Endothelial cell of umbilical vein (primary cell): ENCODE measurements at regions of chr12 and their contacts with region 1.

Region 1: DNA sequence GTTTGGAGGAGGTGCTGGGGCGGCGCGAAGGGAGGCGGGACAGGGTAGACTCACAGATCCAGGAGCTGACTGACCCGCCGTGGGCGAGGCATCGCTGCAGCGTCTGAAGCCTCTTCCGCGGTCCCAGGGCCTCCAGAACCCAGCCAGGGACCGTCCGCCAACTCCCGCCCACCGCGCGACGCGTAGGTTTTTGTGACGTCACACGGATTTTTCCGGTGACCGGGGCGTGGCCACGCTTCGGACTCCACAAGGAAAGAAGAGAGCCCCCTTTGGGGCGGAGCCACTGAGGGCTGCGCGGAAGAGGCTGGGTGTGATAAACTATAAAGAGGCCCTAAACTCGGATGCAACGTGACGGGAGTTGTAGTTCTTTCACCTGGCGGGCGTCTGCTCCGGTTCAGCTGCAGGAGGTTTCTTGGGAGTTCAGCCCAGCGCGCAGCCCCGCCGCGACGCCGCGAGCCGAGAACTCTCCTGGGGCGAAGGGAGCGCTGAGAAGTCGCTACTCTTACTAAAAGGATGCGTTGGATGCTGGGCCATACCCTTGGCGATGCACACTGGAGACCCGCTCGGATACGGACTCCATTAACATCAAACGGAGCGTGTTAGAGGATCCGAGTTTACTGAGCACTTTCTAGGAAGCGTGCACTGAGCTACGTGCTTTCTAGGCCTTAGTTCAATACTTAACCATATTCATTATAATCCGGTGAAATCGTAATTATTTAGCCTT is at the start of gene AMN1:
- DNase-seq: peak; percentile 100
- H3K4me3 ChIP-seq: peak within 1 kb of the TSS; percentile 24 to 75 (median 55)
- H3K27ac ChIP-seq: peak within 1 kb of the TSS; percentile 90
- H3K4me1 ChIP-seq: peaks cover 37% of the 10 kb centered on the region
- H3K27me3 ChIP-seq: no peaks in the 10 kb centered on the region
- CTCF ChIP-seq: no peak
- POLR2A ChIP-seq: peak; percentile 7
- total RNA-seq, gene AMN1: 8.5 and 11.8 TPM in 2 replicates

Region 2: GRCh38 chr12:31682136-31682962 is 46.7 kb before region 1 on chr12:
- CTCF ChIA-PET with region 1: interaction called, 20 read pairs
- POLR2A ChIA-PET with region 1: interaction called, 3 read pairs
- dilution Hi-C with region 1: no loop called
- intact Hi-C with region 1: loop called (anchors 1 kb)
- DNase-seq: peak; percentile 87
- H3K4me3 ChIP-seq: no peak overlapping the region
- H3K27ac ChIP-seq: no peak overlapping the region
- H3K4me1 ChIP-seq: no peaks in the 10 kb centered on the region
- H3K27me3 ChIP-seq: no peaks in the 10 kb centered on the region
- CTCF ChIP-seq: peak; percentile 69 to 71
- POLR2A ChIP-seq: no peak

Region 3: GRCh38 chr12:31715283-31715825 is 13.7 kb before region 1 on chr12:
- CTCF ChIA-PET with region 1: interaction called, 12 read pairs
- POLR2A ChIA-PET with region 1: interaction called, 5 read pairs
- dilution Hi-C with region 1: no loop called
- intact Hi-C with region 1: no loop called
- DNase-seq: peak; percentile 89
- H3K4me3 ChIP-seq: no peak overlapping the region
- H3K27ac ChIP-seq: peak overlapping the region; percentile 85
- H3K4me1 ChIP-seq: peaks cover 10% of the 10 kb centered on the region
- H3K27me3 ChIP-seq: no peaks in the 10 kb centered on the region
- CTCF ChIP-seq: no peak
- POLR2A ChIP-seq: peak; percentile 56

Region 4: GRCh38 chr12:31749024-31749704 is 20.1 kb after region 1 on chr12:
- CTCF ChIA-PET with region 1: interaction called, 14 read pairs
- POLR2A ChIA-PET with region 1: interaction called, 13 read pairs
- dilution Hi-C with region 1: no loop called
- intact Hi-C with region 1: loop called (anchors 1 kb)
- DNase-seq: peak; percentile 98
- H3K4me3 ChIP-seq: no peak overlapping the region
- H3K27ac ChIP-seq: peak overlapping the region; percentile 93
- H3K4me1 ChIP-seq: peaks cover 42% of the 10 kb centered on the region
- H3K27me3 ChIP-seq: no peaks in the 10 kb centered on the region
- CTCF ChIP-seq: no peak
- POLR2A ChIP-seq: peak; percentile 33

Region 5: GRCh38 chr12:31783996-31784645 is 55.0 kb after region 1 on chr12:
- CTCF ChIA-PET with region 1: no interaction called
- POLR2A ChIA-PET with region 1: no interaction called
- dilution Hi-C with region 1: no loop called
- intact Hi-C with region 1: no loop called
- DNase-seq: no peak
- H3K4me3 ChIP-seq: no peak overlapping the region
- H3K27ac ChIP-seq: no peak overlapping the region
- H3K4me1 ChIP-seq: no peaks in the 10 kb centered on the region
- H3K27me3 ChIP-seq: no peaks in the 10 kb centered on the region
- CTCF ChIP-seq: no peak
- POLR2A ChIP-seq: no peak

Region 6: DNA sequence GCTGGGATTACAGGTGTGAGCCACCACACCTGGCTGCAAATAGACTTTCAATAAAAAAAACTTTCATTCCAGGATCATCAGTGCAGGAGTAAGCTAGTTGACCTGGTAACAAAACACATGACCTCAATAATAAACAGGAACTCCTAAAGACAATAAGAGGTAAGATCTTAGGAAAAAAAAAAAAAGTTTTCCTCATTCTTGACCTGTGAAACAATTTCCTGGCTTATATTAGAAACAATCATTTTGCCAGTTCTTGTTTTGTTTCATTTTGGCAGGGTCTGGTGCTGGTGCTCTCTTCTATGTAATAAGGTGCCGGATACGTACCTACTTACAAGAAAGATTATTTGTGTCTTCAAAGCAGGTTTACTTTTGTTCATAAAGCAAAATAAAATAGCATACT is 90.3 kb after region 1 on chr12:
- CTCF ChIA-PET with region 1: no interaction called
- POLR2A ChIA-PET with region 1: no interaction called
- dilution Hi-C with region 1: no loop called
- intact Hi-C with region 1: loop called (anchors 1 kb)
- DNase-seq: peak; percentile 71
- H3K4me3 ChIP-seq: no peak overlapping the region
- H3K27ac ChIP-seq: peak overlapping the region; percentile 83
- H3K4me1 ChIP-seq: peaks cover 15% of the 10 kb centered on the region
- H3K27me3 ChIP-seq: no peaks in the 10 kb centered on the region
- CTCF ChIP-seq: no peak
- POLR2A ChIP-seq: no peak

Region 7: DNA sequence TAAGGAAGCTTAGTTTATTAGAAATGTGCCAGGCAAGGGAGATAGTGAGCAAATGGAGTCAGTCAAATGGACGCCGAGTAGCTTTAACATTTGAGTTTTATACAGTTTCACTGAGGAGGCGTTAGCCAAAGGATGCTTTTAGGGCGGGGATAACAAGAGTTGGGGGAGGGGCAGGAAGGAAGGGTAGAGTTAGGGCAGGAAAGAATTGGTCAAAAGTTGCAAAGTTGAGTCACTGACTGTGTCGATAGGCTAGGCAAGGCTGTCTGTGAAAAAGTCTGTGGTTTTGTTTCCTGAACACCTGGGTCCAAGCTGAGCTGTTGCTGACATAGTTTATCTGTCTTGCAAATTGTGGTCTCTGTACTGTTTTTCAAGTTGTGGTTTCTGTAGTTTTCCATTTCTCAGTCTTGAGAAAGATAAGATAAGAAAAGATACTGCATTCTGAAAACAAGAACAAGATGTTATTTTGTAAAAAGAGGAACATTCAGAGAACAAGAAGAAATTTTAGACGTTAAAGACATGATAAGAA is 167.5 kb after region 1 on chr12:
- CTCF ChIA-PET with region 1: interaction called, 3 read pairs
- POLR2A ChIA-PET with region 1: no interaction called
- dilution Hi-C with region 1: no loop called
- intact Hi-C with region 1: loop called (anchors 1 kb)
- DNase-seq: peak; percentile 91
- H3K4me3 ChIP-seq: peak overlapping the region in 1 of 3 experiments; percentile 30
- H3K27ac ChIP-seq: peak overlapping the region; percentile 74
- H3K4me1 ChIP-seq: peaks cover 18% of the 10 kb centered on the region
- H3K27me3 ChIP-seq: no peaks in the 10 kb centered on the region
- CTCF ChIP-seq: no peak
- POLR2A ChIP-seq: no peak

Region 8: DNA sequence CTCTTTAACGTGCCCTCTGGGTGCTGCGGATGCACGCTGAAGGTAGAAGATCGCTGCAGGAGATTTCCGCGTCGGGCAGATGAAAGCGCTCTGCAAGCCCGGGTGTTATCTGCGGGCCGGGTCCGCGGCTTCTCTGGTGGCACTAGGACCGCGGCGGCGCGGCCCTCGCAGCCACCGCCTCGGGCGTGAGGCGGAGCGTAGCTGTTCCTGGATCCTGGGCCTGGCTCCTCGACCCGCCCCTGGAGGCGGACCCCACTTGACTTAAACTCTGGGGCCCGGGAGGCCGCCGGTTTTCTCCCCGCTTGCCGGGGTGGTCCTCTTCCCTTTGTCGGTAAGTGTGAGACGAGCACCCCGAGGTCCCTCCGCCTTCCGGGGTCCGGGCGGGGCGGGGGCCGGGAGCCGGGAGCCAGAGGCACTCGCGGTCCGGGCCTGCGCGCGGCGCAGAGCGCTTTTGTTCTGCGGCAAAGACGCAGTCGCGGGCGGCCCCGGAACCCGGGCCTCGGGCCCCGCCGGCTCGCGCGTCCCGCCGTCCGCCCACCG is 230.2 kb after region 1 on chr12 and contains the start of gene RESF1:
- CTCF ChIA-PET with region 1: interaction called, 9 read pairs
- POLR2A ChIA-PET with region 1: interaction called, 4 read pairs
- dilution Hi-C with region 1: no loop called
- intact Hi-C with region 1: loop called (anchors 1 kb)
- DNase-seq: peak; percentile 88
- H3K4me3 ChIP-seq: peak within 1 kb of the TSS; percentile 72 to 98 (median 88)
- H3K27ac ChIP-seq: peak within 1 kb of the TSS; percentile 74
- H3K4me1 ChIP-seq: peaks cover 21% of the 10 kb centered on the region
- H3K27me3 ChIP-seq: no peaks in the 10 kb centered on the region
- CTCF ChIP-seq: no peak
- POLR2A ChIP-seq: peak; percentile 90
- total RNA-seq, gene RESF1: 62.1 and 70.0 TPM in 2 replicates

Region 9: DNA sequence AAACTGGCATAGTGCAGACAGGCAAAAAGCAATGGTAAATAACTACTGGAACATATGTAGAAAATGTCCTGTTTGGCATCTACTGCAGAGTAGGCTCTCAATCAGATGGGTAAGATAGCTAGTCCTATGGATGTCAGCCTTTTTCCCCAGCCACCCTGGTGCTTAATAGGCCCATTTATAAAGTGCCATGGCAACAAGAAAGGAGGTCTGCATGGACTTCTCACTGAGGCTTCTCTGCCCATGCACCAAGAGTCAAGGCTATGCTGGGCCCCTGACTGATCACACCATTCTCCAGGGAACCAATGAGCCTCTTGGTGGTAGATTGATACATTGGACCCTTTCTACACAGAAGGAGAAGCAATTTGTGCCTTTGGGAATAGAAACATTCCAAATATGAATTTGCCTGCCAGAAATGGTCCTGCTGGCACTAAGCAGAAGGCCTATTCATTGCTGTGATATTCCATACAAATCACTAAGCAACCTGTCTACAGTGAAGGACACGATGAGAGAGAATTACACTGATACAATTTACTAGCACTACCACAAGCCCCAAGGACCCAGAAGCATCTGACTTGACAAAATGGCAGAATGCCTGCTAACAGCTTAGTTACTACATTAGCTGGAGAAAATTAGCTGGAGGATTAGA is 273.9 kb after region 1 on chr12:
- CTCF ChIA-PET with region 1: no interaction called
- POLR2A ChIA-PET with region 1: no interaction called
- dilution Hi-C with region 1: no loop called
- intact Hi-C with region 1: no loop called
- DNase-seq: no peak
- H3K4me3 ChIP-seq: no peak overlapping the region
- H3K27ac ChIP-seq: no peak overlapping the region
- H3K4me1 ChIP-seq: no peaks in the 10 kb centered on the region
- H3K27me3 ChIP-seq: no peaks in the 10 kb centered on the region
- CTCF ChIP-seq: no peak
- POLR2A ChIP-seq: peak; percentile 7